Naive thymus-derived CD4-positive, alpha-beta T cell (primary cell): ENCODE measurements at regions of chr19 and their contacts with region 1.

Region 1: DNA sequence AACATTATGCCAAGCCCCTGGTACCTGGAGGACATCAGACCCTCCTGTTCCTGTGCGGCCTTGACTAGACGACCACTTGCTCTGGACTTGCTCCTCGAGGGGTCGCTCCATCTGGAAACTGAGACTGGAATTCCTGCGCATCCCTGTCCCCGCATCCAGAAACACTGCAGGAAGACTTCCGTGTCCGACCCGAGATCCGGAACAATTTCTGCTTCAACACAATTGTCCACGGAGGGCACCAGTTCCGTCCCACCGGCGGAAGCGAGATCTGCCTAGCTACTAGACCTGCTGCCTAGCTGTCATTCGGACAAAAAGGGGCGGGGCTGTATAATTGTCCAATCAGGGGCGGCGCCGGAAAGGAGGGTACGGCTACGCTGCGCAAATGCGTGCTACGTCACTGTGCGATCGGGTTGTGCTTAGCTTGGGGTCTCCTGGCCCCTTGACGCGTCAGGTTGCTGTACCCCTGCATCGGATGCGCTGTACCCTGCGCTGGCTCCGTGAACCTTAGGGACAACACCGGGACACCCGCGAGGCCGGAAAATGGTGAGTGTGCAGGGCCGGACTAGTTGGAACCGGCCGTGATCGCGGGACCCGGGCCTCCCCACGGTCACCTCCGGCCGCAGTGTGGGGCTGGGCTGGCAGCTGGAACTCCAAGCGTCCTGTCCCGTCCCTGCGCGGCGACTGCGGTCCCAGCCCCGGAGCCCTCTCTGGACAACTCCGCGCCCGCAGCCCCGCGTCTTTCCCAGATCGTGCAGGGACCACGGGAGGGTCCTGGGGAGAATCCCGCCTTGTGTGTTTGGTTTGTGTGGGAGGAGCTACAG is at the starts of genes ZNF490 and ZNF791:
- DNase-seq: peak; percentile 81 to 97 (median 94)
- ATAC-seq: peak; percentile 94
- H3K4me3 ChIP-seq: peak within 1 kb of the TSS; percentile 71
- H3K4me3 Mint-ChIP-seq: peak within 1 kb of the TSS; percentile 94 to 100 (median 100)
- H3K27ac ChIP-seq: peak within 1 kb of the TSS; percentile 95
- H3K27ac Mint-ChIP-seq: peak within 1 kb of the TSS; percentile 97 to 100 (median 99)
- H3K4me1 ChIP-seq: peaks cover 24 to 41% of the 10 kb centered on the region in 2 donors
- H3K4me1 Mint-ChIP-seq: peaks cover 16 to 48% (median 36%) of the 10 kb centered on the region in 7 donors
- H3K27me3 ChIP-seq: no peaks in the 10 kb centered on the region
- H3K27me3 Mint-ChIP-seq: no peaks in the 10 kb centered on the region
- total RNA-seq, gene ZNF490: 10.3 to 14.9 (median 11.6) TPM
- total RNA-seq, gene ZNF791: 29.1 to 53.3 (median 38.7) TPM

Region 2: DNA sequence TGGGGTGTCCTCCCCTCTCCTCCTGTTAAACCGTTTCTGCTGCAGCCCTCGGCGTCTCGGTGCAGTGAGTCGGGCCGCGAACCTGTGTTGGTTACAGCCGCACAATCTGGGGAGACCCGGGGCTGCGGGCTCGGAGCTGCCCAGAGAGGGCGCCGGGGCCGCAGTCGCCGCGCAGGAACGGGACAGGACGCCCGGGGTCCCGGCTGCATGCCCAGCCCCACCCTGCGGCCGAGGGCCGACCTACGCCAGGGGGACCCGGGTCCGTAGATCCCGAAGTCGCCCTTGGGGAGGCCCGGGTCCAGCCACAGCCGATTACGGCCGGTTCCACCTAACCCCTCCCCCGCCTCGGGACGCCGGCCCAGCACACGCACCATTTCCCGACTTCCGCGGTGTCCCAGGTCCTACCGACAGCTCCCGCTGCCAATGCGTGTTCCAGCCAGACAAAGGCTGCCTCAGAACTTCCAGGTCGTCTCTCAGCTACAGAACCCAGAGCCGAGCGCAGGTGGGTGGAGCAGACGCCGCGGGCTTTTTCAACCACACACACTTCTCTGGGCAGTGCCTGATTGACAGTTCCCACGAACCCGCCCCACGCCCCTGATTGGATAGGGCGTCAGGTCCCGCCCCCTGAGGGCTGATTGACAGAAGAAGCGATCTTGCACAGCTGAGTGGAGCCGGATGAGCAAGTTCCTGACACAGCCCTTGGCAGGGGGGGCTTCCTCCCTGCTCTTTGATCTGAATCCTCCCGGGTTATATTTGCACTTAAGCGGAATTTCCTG is 170.0 kb before region 1 on chr19 and contains the start of gene ZNF443:
- CTCF ChIA-PET with region 1: no interaction called
- POLR2A ChIA-PET with region 1: no interaction called
- intact Hi-C with region 1: loop called in 1 of 2 experiments (anchors 5 kb)
- DNase-seq: peak; percentile 93 to 99 (median 98)
- ATAC-seq: peak; percentile 99
- H3K4me3 ChIP-seq: peak within 1 kb of the TSS; percentile 80
- H3K4me3 Mint-ChIP-seq: peak within 1 kb of the TSS; percentile 97 to 100 (median 100)
- H3K27ac ChIP-seq: peak within 1 kb of the TSS; percentile 72
- H3K27ac Mint-ChIP-seq: peak within 1 kb of the TSS; percentile 84 to 99 (median 96)
- H3K4me1 ChIP-seq: no peaks in the 10 kb centered on the region
- H3K4me1 Mint-ChIP-seq: peaks cover 12 to 34% (median 24%) of the 10 kb centered on the region in 7 donors
- H3K27me3 ChIP-seq: no peaks in the 10 kb centered on the region
- H3K27me3 Mint-ChIP-seq: no peaks in the 10 kb centered on the region
- total RNA-seq, gene ZNF443: 3.0 to 9.1 (median 4.1) TPM

Region 3: GRCh38 chr19:12639901-12640613 is 29.3 kb after region 1 on chr19:
- CTCF ChIA-PET with region 1: no interaction called
- POLR2A ChIA-PET with region 1: interaction called, 7 read pairs
- intact Hi-C with region 1: loop called (anchors 1 kb)
- DNase-seq: peak; percentile 64 to 81 (median 78)
- ATAC-seq: peak; percentile 93
- H3K4me3 ChIP-seq: peak overlapping the region; percentile 40
- H3K4me3 Mint-ChIP-seq: peak overlapping the region; percentile 73 to 85 (median 80)
- H3K27ac ChIP-seq: peak overlapping the region; percentile 5
- H3K27ac Mint-ChIP-seq: peak overlapping the region; percentile 39 to 89 (median 82)
- H3K4me1 ChIP-seq: peaks cover 3 to 12% of the 10 kb centered on the region in 2 donors
- H3K4me1 Mint-ChIP-seq: peaks cover 12 to 28% (median 21%) of the 10 kb centered on the region in 7 donors
- H3K27me3 ChIP-seq: no peaks in the 10 kb centered on the region
- H3K27me3 Mint-ChIP-seq: no peaks in the 10 kb centered on the region

Region 4: DNA sequence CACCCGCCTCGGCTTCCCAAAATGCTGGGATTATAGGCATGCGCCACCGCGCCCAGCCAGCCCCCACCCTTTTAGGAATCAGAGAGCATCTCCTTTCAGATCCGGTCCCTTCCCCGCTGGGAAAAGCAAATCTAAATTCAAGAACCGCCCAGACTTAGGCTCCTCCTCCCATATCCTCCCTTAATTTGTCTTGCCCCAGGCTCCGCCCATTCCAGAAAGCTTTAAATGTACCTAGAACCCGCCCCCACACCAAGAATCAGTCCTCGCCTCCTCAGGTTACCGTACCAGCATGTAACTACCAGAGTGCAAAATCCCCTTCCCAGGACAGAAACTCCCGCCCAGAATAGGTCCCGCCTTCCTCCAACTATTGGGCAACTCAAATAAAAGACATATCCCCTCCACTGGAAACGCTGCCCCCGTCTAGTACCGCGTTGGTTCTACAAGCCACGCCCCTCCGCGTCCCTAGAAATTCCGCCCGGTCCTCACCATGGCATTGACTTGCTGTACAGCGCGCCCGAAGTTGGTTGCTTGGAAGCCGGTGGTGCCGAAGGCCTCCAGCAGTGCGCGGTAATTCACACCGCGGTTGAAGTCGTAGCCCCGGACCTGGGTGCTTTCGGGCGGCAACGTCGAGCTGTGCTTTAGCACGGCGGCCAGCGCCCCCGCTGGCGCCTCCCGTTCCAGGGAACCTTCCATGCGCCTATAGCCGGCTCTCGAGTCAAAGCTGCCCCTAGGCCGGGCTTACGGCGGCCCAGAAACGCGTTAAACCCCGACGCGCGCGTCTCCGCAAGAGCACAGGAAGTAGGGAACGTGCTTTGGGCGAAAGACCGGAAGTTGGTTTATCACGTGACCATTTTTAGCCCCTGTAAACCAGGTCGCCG is 70.6 kb after region 1 on chr19 and contains the start of gene DHPS:
- CTCF ChIA-PET with region 1: no interaction called
- POLR2A ChIA-PET with region 1: interaction called, 9 read pairs
- intact Hi-C with region 1: loop called (anchors 1 kb)
- DNase-seq: peak; percentile 58 to 95 (median 93)
- ATAC-seq: peak; percentile 85
- H3K4me3 ChIP-seq: peak within 1 kb of the TSS; percentile 100
- H3K4me3 Mint-ChIP-seq: peak within 1 kb of the TSS; percentile 92 to 99 (median 96)
- H3K27ac ChIP-seq: peak within 1 kb of the TSS; percentile 95
- H3K27ac Mint-ChIP-seq: peak within 1 kb of the TSS; percentile 86 to 98 (median 94)
- H3K4me1 ChIP-seq: peaks cover 6 to 19% of the 10 kb centered on the region in 2 donors
- H3K4me1 Mint-ChIP-seq: peaks cover 18 to 34% (median 26%) of the 10 kb centered on the region in 7 donors
- H3K27me3 ChIP-seq: no peaks in the 10 kb centered on the region
- H3K27me3 Mint-ChIP-seq: no peaks in the 10 kb centered on the region
- total RNA-seq, gene DHPS: 125 to 223 (median 174) TPM